ENCODE measurements at regions of chr2 and their contacts with region 1.

Region 1: DNA sequence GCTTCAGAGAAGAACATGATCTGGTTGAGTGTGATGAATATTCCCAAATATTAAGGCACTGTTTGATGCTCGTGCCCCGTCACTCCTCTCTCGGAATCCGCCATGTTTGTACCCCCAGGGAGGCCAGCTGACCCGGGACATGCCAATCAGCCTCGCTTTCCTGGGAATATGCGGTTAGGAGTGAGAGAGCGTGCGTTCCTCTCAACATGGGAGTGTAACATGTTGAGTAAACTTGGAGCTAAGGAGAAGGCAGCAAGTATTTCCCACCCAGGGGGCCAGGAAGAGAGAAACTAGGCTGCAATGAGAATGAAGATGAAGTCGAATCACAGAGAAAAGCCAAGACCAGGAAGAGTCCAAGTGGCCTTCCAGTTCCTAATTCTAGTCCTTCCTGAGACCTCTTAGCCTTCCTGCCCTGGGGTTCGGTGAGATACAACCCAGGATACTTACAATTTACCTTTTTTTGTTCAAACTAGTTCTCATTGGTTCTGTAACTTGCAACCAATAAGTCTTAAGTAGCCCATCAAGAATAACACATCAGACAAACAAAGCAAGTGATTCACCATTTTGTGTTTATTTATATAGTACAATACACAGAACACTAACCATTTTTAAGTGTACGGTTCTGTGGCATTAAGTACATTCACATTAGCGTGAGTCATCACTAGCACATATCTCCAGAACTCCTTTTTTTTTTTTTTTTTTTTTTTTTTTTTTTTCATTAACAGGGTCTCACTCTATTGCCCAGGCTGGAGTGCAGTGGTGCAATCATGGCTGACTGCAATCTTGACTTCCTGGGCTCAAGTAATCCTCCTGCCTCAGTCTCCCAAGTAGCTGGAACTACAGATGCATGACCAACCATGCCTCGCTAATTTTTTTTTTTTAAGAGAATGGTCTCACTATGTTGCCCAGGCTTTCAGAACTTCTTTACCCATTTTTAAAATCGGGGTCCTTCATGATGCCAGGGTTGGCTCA is 36.4 kb upstream of the SLC1A4 start:
- DNase-seq: no peak
- ATAC-seq: no peak
- H3K4me3 ChIP-seq: no peak overlapping the region
- H3K27ac ChIP-seq: no peak overlapping the region
- H3K4me1 ChIP-seq: peaks cover 0 to 10% (median 0%) of the 10 kb centered on the region in 9 donors
- H3K27me3 ChIP-seq: no peaks in the 10 kb centered on the region
- CTCF ChIP-seq: no peak

Region 2: GRCh38 chr2:64538764-64539433 is 413.9 kb before region 1 on chr2:
- intact Hi-C with region 1: no loop called
- DNase-seq: no peak
- ATAC-seq: no peak
- H3K4me3 ChIP-seq: no peak overlapping the region
- H3K27ac ChIP-seq: no peak overlapping the region
- H3K4me1 ChIP-seq: peaks cover 0 to 42% (median 21%) of the 10 kb centered on the region in 9 donors
- H3K27me3 ChIP-seq: no peaks in the 10 kb centered on the region
- CTCF ChIP-seq: no peak

Region 3: DNA sequence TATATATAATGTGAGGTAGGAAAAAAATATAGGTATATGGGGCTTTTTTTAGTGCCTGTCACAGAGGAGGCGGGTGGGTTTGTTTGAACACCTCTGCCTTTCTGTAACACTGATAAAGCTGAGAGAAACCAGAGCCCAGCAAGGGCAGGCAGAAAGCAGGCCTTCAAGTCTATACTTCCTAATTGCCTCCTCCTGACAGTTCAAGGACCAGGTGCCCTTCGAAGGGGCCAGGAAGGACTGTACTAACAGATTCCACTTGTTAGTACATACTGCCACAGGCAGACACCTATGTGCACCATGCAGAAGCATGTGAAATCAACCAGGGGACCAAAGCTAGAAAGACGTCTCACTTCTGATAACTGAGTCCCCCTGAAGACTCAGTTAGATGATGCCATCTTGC is 50.2 kb after region 1 on chr2:
- intact Hi-C with region 1: loop called in 1 of 10 experiments (anchors 5 kb)
- DNase-seq: peak in 1 of 2 donors; percentile 9
- ATAC-seq: peak in 6 of 8 donors; percentile 28 to 79 (median 52)
- H3K4me3 ChIP-seq: no peak overlapping the region
- H3K27ac ChIP-seq: peak overlapping the region in 2 of 10 donors; percentile 15 to 32
- H3K4me1 ChIP-seq: peaks cover 0 to 22% (median 17%) of the 10 kb centered on the region in 9 donors
- H3K27me3 ChIP-seq: no peaks in the 10 kb centered on the region
- CTCF ChIP-seq: no peak

Region 4: GRCh38 chr2:65103013-65103715 is 150.4 kb after region 1 on chr2:
- intact Hi-C with region 1: no loop called
- DNase-seq: no peak
- ATAC-seq: peak in 2 of 8 donors; percentile 23 to 27
- H3K4me3 ChIP-seq: no peak overlapping the region
- H3K27ac ChIP-seq: no peak overlapping the region
- H3K4me1 ChIP-seq: peaks cover 8 to 53% (median 29%) of the 10 kb centered on the region in 9 donors
- H3K27me3 ChIP-seq: no peaks in the 10 kb centered on the region
- CTCF ChIP-seq: no peak

Measured in heart right ventricle (tissue), 16 donors.